PC-3 (cell line): ENCODE measurements at regions of chr13 and their contacts with region 1.

Region 1: GRCh38 chr13:51920267-51921185 is 58.8 kb downstream of the CCDC70 start:
- DNase-seq: no peak
- ATAC-seq: no peak
- H3K4me3 ChIP-seq: no peak overlapping the region
- H3K27ac ChIP-seq: no peak overlapping the region
- H3K4me1 ChIP-seq: peaks cover 7% of the 10 kb centered on the region; the same call in 1 of the 2 replicates
- H3K27me3 ChIP-seq: no peaks in the 10 kb centered on the region
- CTCF ChIP-seq: no peak

Region 2: DNA sequence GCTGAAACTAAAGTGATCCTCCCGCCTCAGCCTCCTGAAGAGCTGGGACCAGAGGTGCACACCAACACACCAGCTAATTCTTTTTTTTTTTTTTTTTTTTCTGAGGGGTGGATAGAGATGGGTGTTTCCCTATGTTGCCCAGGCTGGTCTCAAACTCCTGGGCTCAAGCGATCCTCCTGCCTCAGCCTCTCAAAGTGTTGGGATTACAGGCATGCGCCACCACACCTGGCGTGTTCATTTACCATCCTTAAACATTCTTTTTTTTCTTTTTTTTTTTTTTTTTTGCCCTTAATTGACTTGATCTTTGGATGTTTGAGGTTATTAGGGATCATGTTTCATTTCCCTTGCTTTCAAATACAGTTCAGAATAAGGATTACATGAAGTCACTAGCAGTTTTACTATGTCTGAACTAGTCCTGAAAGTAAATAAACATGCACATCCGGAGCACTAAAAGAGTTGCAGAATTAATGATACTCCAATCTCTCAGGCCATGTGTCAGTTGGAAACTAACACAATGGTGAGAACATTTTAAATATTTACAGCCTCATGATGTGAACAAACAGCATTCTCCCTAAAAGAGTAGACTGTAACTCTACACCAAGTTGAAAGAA is 114.2 kb after region 1 on chr13:
- CTCF ChIA-PET with region 1: no interaction called
- POLR2A ChIA-PET with region 1: interaction called, 24 read pairs
- intact Hi-C with region 1: no loop called
- DNase-seq: no peak
- ATAC-seq: peak; percentile 33
- H3K4me3 ChIP-seq: no peak overlapping the region
- H3K27ac ChIP-seq: no peak overlapping the region
- H3K4me1 ChIP-seq: no peaks in the 10 kb centered on the region
- H3K27me3 ChIP-seq: no peaks in the 10 kb centered on the region
- CTCF ChIP-seq: no peak

Region 3: GRCh38 chr13:52104624-52105023 is 184.1 kb after region 1 on chr13:
- CTCF ChIA-PET with region 1: no interaction called
- POLR2A ChIA-PET with region 1: no interaction called
- intact Hi-C with region 1: no loop called
- DNase-seq: no peak
- ATAC-seq: no peak
- H3K4me3 ChIP-seq: no peak overlapping the region
- H3K27ac ChIP-seq: no peak overlapping the region
- H3K4me1 ChIP-seq: no peaks in the 10 kb centered on the region
- H3K27me3 ChIP-seq: no peaks in the 10 kb centered on the region
- CTCF ChIP-seq: no peak